Activated CD4-positive, alpha-beta T cell treated with anti-CD3 and anti-CD28 coated beads for 36 hours (primary cell): ENCODE measurements at regions of chr1 and their contacts with region 1.

Region 1: DNA sequence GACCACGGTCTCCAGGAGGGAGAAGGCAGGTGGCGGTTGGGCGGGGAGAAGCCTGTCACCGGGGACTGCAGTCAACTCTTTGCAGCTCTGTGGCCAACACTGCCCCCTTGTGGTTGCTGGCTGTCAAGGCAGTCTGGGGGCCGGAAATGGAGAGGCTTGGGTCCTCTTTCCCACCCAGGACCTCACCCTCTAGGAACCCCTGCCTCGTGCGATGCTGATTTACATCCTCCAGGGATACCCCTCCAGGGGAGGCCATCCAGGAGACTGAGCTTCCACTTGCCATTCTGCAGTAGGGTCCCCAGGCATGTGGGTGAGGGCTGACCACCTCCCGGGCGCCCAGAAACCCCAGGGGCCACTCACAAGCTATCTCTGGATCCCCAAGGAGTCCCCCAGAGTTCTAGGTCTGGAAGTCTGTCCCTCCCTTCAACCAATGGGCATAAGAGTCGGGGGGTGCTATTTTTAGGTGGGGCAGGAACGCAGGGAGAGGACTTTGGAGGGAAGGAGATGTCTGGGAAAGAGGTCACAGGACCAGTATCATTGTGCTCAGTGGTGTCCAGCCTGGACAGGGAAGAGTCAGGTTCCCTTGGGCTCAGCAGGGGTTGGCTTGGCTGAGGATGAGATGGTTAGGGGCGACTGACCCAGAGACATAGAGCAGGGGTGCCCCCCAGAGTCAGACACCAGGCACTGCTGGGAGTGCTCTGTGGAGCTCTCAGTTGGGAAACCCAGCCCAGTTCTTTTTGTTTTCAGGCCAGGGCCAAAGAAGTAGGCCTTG is 7.1 kb upstream of the GPR61 start:
- DNase-seq: peak; percentile 95
- ATAC-seq: peak; percentile 90
- H3K4me3 Mint-ChIP-seq: peak overlapping the region; percentile 15
- H3K27ac Mint-ChIP-seq: peak overlapping the region; percentile 71
- H3K4me1 Mint-ChIP-seq: peaks cover 22% of the 10 kb centered on the region
- H3K27me3 Mint-ChIP-seq: no peaks in the 10 kb centered on the region

Region 2: DNA sequence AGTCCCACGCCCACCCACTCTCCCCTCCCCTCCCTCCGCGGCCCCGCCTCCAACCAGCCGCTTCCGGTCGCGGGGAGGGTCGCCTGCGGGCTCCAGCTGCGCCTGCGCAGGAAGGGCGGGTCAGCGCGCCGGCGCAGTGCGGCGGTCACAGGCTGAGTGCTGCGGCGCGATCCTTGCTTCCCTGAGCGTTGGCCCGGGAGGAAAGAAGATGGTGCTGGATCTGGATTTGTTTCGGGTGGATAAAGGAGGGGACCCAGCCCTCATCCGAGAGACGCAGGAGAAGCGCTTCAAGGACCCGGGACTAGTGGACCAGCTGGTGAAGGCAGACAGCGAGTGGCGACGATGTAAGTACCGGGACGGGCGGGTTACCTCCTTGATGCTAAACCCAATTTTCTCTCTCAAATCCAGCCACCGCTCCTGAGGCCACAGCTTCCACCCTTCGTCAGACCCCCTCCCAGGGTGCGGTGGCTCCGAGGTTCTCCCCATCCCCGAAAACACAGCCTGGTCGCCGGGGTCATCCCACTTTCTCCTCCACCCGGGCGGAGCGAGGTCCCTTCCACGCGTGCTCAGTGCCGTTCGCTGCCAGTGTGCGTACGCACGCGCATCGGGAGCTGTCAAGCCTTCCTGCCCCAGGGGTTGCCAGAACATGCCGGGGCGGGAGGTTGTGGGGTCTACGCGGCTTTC is 318.6 kb before region 1 on chr1 and contains the start of gene SARS1:
- CTCF ChIA-PET with region 1: interaction called, 3 read pairs
- POLR2A ChIA-PET with region 1: no interaction called
- intact Hi-C with region 1: loop called in 1 of 2 experiments (anchors 1 kb)
- DNase-seq: peak; percentile 93
- ATAC-seq: peak; percentile 85
- H3K4me3 Mint-ChIP-seq: peak within 1 kb of the TSS; percentile 97
- H3K27ac Mint-ChIP-seq: peak within 1 kb of the TSS; percentile 95
- H3K4me1 Mint-ChIP-seq: peaks cover 32% of the 10 kb centered on the region
- H3K27me3 Mint-ChIP-seq: peaks cover 1% of the 10 kb centered on the region
- total RNA-seq, gene SARS1: 224 to 240 TPM

Region 3: GRCh38 chr1:109282952-109283747 is 249.4 kb before region 1 on chr1 and contains the start of gene PSRC1:
- CTCF ChIA-PET with region 1: interaction called, 36 read pairs
- POLR2A ChIA-PET with region 1: interaction called, 3 read pairs
- intact Hi-C with region 1: loop called in 1 of 2 experiments (anchors 1 kb)
- DNase-seq: peak; percentile 95
- ATAC-seq: peak; percentile 98
- H3K4me3 Mint-ChIP-seq: peak within 1 kb of the TSS; percentile 86
- H3K27ac Mint-ChIP-seq: peak within 1 kb of the TSS; percentile 90
- H3K4me1 Mint-ChIP-seq: peaks cover 11% of the 10 kb centered on the region
- H3K27me3 Mint-ChIP-seq: no peaks in the 10 kb centered on the region
- total RNA-seq, gene PSRC1: 17.6 to 18.4 TPM

Region 4: DNA sequence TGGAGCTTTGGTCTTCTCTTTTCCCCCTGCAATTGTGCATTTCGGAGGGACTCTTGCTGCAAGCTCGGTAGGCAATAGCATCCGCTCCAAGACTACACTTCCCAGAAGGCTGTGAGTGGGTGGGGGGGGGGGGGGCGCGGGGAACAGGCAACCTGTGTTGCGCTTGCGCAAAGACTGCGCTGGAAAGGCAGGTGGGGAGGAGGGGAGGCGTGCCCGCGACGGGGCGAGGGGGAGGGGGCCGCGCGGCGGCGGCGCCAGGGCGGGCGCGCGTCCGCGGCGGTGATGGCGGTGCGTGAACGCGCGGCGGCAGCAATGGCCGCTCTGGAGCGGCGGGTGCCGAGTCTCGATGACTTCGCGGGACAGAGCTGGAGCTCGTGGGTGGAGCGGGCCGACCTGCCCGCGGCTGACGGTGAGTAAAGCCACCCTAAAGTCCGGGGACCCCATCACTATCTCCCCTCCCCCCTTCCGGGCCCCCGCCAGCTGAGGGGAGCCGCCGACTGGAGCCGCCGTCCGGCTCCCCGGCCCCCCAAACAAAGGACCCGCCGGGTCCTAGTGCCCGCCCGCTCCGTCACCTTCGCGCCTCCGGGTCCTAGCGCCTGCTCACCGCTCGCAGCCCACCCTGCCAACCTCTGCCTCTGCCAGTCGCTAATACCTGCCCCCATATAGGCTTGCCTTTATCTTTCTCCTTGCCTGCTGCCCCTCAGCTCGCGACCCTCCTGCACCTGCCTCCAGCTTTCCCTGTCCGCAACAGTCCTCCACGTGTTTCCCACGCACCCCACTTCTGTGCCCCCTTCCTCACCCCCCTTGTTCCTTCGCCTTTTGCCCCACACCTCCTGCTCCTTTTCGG is 48.7 kb before region 1 on chr1 and contains the start of gene ATXN7L2:
- CTCF ChIA-PET with region 1: interaction called, 864 read pairs
- POLR2A ChIA-PET with region 1: no interaction called
- intact Hi-C with region 1: no loop called
- DNase-seq: peak; percentile 96
- ATAC-seq: peak; percentile 79
- H3K4me3 Mint-ChIP-seq: peak within 1 kb of the TSS; percentile 88
- H3K27ac Mint-ChIP-seq: peak within 1 kb of the TSS; percentile 96
- H3K4me1 Mint-ChIP-seq: peaks cover 33% of the 10 kb centered on the region
- H3K27me3 Mint-ChIP-seq: no peaks in the 10 kb centered on the region
- total RNA-seq, gene ATXN7L2: 11.7 to 13.0 TPM

Region 5: GRCh38 chr1:109516872-109517271 is 15.7 kb before region 1 on chr1:
- CTCF ChIA-PET with region 1: interaction called, 864 read pairs
- POLR2A ChIA-PET with region 1: interaction called, 3 read pairs
- intact Hi-C with region 1: no loop called
- DNase-seq: no peak
- ATAC-seq: no peak
- H3K4me3 Mint-ChIP-seq: no peak overlapping the region
- H3K27ac Mint-ChIP-seq: no peak overlapping the region
- H3K4me1 Mint-ChIP-seq: no peaks in the 10 kb centered on the region
- H3K27me3 Mint-ChIP-seq: no peaks in the 10 kb centered on the region